ENCODE measurements at regions of chr6 and their contacts with region 1.

Region 1: DNA sequence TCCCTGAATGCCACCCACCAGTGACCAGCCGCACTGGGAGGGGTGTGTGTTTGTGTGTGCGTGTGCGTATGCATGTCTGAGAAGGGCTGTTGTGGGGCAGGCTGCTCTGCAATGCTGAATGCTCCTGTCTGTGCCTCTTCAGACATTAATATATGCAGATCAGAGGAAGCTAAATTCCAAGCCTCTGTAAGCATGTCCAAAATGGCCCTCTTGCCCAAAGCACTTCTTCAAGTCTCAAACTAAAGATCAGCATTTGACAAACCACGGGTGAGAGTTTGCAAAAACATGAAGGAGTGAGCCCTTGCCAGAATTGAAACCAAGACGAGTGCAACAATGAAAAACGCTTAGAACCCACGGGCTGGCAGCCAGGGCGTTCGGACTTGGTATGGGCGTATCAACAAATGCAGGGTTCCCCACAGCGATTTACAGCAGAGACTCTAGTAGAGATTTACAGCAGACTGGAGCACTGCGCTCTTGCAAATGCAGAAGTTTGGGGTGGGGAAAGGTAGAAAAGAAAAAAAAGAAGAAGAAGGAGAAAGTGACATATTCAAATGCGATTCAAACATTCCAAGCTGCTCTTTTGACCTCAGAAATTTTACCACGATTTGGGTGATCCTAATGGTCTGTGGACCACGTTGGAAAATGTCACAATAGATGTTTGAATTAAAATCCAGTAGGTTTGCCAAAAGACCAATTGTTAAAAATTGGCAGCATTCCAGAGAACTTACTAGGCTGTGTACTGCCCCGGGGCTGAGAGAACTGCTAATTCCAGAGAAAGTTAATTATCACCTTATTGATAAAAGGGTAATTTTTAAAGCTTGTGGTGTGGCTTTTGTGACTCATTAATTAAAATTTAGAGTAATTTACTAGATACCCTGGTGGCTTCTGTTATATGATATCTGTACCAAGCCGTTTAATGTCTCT is 3.5 kb downstream of the SCML4 start:
- DNase-seq: peak; percentile 86
- H3K4me3 Mint-ChIP-seq: peak overlapping the region; percentile 80
- H3K27ac Mint-ChIP-seq: peak overlapping the region; percentile 95
- H3K4me1 Mint-ChIP-seq: peaks cover 82% of the 10 kb centered on the region
- H3K27me3 Mint-ChIP-seq: no peaks in the 10 kb centered on the region

Region 2: GRCh38 chr6:107716688-107717089 is 103.9 kb before region 1 on chr6:
- intact Hi-C with region 1: loop called (anchors 1 kb)
- DNase-seq: peak; percentile 93
- H3K4me3 Mint-ChIP-seq: peak overlapping the region; percentile 71
- H3K27ac Mint-ChIP-seq: peak overlapping the region; percentile 85
- H3K4me1 Mint-ChIP-seq: peaks cover 52% of the 10 kb centered on the region
- H3K27me3 Mint-ChIP-seq: no peaks in the 10 kb centered on the region

Region 3: DNA sequence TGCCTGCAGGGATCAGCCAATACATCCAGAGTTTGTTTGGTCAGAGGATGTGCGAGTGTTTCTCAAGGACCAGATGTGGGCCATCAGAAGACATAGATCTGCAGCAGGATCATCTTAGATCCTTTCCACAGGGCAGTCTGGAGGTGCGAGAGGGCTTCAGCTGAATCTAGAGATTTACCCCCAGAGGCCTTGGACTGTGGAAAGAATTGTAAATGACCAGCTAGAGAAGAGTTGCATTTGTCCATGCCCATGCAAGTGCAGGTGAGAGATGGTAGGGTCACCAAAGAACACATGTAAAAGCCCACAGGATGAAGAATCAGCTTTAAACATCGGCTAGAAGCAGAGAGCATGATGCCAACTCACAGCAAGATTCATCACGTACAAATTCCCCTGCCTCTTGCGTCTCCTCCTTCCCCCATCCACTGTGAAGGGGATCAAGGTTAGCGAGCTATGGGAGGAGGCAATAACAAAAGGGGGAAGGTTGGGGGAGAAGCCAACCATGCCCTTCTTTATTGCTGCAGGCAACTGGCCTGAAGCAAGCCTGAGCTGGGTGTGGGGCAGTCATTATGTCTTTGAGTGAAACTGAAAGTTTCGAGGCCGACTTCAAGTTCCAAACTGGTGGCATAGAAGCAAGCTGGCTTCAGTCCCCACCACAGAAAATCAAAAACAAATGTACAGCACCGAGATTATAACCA is 80.0 kb before region 1 on chr6:
- intact Hi-C with region 1: loop called (anchors 1 kb)
- DNase-seq: peak; percentile 85
- H3K4me3 Mint-ChIP-seq: peak overlapping the region; percentile 81
- H3K27ac Mint-ChIP-seq: peak overlapping the region; percentile 78
- H3K4me1 Mint-ChIP-seq: peaks cover 56% of the 10 kb centered on the region
- H3K27me3 Mint-ChIP-seq: no peaks in the 10 kb centered on the region

Region 4: GRCh38 chr6:107786709-107787588 is 33.7 kb before region 1 on chr6:
- intact Hi-C with region 1: loop called (anchors 1 kb)
- DNase-seq: peak; percentile 86
- H3K4me3 Mint-ChIP-seq: peak overlapping the region; percentile 78
- H3K27ac Mint-ChIP-seq: peak overlapping the region; percentile 72
- H3K4me1 Mint-ChIP-seq: peaks cover 58% of the 10 kb centered on the region
- H3K27me3 Mint-ChIP-seq: no peaks in the 10 kb centered on the region

Region 5: DNA sequence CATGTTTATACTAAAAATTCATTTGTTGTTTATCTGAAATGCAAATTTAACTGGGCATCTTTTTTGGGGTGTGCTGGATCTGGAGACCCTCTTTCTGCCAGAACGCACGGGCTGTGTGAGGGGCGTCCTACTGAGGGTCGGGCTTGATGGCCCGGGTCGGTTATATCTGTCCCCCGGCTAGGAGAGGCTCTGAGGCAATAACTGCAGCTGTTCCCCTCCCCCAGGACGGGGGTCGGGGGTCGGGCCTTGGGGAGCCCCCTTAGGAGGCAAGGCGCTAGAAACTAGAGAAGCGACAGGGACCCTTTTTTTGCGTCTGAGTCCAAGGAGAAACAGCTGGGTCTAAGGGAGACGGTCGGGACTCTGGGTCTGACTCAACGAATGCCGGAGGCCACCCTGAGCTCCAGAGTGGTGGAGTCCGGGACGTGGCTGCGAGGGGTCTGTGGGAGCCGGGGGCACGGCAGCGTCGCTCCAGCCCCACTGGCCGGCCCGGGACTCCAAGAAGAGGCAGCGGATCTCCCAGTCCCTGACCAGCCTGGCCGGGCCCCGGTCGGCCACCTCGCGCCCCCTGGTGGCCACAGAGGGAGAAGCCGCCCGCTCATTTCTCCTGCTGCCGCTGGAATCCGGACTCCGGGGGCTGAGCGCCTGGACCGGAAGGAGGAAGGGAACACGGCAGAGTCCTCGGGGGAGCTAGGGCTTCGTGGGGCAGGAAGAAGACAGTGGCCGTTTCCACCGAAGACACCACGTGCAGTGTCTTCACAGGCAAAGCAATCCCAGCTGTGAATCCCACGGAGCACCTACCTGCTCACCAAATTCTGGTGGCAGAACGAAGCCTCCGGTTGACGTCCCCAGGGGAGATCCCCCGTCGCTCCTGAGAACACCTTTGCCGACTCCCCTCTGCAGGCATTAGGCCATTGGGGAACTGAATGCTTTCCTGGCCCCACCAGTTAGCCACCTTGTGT is 27.5 kb after region 1 on chr6:
- intact Hi-C with region 1: loop called (anchors 1 kb)
- DNase-seq: peak; percentile 95
- H3K4me3 Mint-ChIP-seq: peak overlapping the region; percentile 80
- H3K27ac Mint-ChIP-seq: peak overlapping the region; percentile 54
- H3K4me1 Mint-ChIP-seq: peaks cover 21% of the 10 kb centered on the region
- H3K27me3 Mint-ChIP-seq: peaks cover 6% of the 10 kb centered on the region

Region 6: DNA sequence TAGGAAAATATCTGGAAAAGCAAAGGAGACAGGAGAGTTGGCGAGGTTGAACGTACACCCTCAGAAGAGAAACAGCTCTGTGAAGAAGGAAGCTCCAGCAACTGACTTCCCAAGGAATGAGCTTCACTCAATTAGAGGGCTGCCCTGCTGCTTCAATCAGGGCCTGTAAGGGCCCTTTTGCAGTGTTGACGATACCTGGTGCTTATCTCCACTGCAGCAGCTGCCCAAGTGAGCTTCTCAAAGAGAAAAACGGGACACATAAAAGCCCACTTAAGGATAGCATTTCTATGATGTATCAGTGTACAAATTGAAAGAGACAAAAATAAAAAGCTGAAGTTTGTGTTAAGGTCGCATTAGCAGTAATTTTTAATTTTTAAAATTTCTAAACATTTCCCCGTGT is 121.0 kb after region 1 on chr6:
- intact Hi-C with region 1: no loop called
- DNase-seq: no peak
- H3K4me3 Mint-ChIP-seq: no peak overlapping the region
- H3K27ac Mint-ChIP-seq: no peak overlapping the region
- H3K4me1 Mint-ChIP-seq: peaks cover 13% of the 10 kb centered on the region
- H3K27me3 Mint-ChIP-seq: no peaks in the 10 kb centered on the region